ENCODE measurements at regions of chr3 and their contacts with region 1.

Region 1: GRCh38 chr3:134485718-134486576 is at the starts of genes ANAPC13 and CEP63:
- DNase-seq: peak; percentile 99 to 100 (median 100)
- H3K4me3 ChIP-seq: peak within 1 kb of the TSS; percentile 72 to 95 (median 91)
- H3K27ac ChIP-seq: peak within 1 kb of the TSS; percentile 90 to 95
- H3K4me1 ChIP-seq: peaks cover 37 to 47% (median 40%) of the 10 kb centered on the region in 4 experiments
- H3K27me3 ChIP-seq: no peaks in the 10 kb centered on the region

Region 2: DNA sequence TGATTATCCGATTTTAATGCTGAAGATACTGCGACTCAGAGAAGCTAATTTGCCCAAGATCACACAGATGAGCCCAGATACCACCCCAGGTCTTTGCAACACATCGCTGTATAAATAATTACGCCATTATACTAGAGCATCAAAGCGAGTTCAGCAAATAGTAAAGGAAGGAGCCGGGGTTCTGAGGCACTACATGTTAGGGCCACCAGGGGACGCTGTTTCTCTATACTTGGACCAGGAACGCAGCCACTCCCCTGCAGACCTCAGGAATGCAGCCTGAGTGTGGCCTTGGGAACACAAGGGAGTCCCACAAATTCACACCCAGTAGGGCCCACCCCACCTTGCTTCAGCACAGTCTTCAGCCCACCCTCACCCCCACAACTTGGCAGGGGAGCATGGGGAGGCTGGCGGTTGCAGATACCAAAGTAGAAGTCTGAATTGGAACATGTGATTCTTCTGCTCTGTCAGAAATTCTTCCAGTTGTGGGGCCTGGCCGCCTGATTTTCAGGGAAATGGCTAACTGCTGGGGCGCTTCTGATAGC is 177.5 kb before region 1 on chr3:
- CTCF ChIA-PET with region 1: interaction called, 23 read pairs
- POLR2A ChIA-PET with region 1: no interaction called
- DNase-seq: peak; percentile 73 to 82 (median 74)
- H3K4me3 ChIP-seq: peak overlapping the region in 1 of 7 experiments; percentile 35
- H3K27ac ChIP-seq: no peak overlapping the region
- H3K4me1 ChIP-seq: peaks cover 0 to 9% (median 6%) of the 10 kb centered on the region in 4 experiments
- H3K27me3 ChIP-seq: peaks cover 0 to 32% (median 18%) of the 10 kb centered on the region in 5 experiments